ENCODE measurements at regions of chr10 and their contacts with region 1.

Region 1: DNA sequence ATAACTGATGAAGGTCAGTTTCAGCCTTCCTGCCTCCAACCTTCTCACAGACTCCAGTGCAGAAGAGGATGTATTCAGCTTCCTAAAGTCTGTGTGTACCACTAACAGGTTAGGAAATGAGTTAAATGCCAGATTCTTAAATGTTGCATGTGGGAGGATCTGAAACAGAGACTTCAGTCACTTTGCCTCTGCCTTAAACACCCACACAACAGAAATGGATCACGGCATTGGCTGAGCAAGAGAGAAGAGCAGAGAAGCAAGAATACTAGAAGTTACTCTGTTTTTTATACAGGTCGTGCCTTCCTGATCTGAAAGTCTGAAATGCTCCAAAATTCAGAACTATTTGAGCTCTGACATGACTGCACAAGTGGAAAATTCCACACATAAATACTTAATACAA is 98.9 kb upstream of the ARHGAP21 start:
- DNase-seq: no peak
- H3K4me3 Mint-ChIP-seq: no peak overlapping the region
- H3K27ac Mint-ChIP-seq: no peak overlapping the region
- H3K4me1 Mint-ChIP-seq: peaks cover 40% of the 10 kb centered on the region
- H3K27me3 Mint-ChIP-seq: peaks cover 2% of the 10 kb centered on the region

Region 2: DNA sequence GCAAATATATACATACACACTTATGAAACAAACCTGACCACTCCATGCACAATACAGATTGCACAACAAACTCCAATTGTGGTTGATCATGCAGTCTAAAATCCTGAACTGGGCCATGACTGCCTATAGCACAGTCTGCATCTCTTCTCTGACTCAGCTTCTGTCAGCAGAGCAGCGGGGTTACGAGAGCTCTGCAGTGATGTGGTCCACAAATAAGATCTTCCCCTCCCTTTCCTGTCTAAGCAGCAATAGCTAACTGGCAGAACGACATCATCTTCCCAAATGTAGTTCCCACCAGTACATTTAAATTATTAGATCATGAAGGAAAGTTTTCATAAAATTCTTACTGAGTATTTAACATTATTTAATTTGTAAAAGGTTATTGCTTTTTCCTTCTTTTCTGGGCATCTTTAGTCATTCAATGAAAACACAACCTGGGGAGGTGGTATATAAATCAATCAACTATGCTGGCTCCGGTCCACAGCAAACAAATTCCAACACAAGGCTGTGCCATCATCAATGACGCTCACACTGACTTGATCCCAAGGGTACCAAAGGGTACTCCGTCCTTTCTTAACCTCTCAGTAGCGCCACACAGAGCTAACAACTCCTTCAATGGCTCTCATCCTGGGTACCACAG is 116.0 kb before region 1 on chr10:
- intact Hi-C with region 1: loop called (anchors 5 kb)
- DNase-seq: peak; percentile 26
- H3K4me3 Mint-ChIP-seq: no peak overlapping the region
- H3K27ac Mint-ChIP-seq: no peak overlapping the region
- H3K4me1 Mint-ChIP-seq: peaks cover 23% of the 10 kb centered on the region
- H3K27me3 Mint-ChIP-seq: no peaks in the 10 kb centered on the region

Region 3: GRCh38 chr10:24882047-24882698 is 59.6 kb after region 1 on chr10:
- intact Hi-C with region 1: loop called (anchors 5 kb)
- DNase-seq: peak; percentile 15
- H3K4me3 Mint-ChIP-seq: peak overlapping the region; percentile 19
- H3K27ac Mint-ChIP-seq: no peak overlapping the region
- H3K4me1 Mint-ChIP-seq: peaks cover 30% of the 10 kb centered on the region
- H3K27me3 Mint-ChIP-seq: no peaks in the 10 kb centered on the region

Region 4: DNA sequence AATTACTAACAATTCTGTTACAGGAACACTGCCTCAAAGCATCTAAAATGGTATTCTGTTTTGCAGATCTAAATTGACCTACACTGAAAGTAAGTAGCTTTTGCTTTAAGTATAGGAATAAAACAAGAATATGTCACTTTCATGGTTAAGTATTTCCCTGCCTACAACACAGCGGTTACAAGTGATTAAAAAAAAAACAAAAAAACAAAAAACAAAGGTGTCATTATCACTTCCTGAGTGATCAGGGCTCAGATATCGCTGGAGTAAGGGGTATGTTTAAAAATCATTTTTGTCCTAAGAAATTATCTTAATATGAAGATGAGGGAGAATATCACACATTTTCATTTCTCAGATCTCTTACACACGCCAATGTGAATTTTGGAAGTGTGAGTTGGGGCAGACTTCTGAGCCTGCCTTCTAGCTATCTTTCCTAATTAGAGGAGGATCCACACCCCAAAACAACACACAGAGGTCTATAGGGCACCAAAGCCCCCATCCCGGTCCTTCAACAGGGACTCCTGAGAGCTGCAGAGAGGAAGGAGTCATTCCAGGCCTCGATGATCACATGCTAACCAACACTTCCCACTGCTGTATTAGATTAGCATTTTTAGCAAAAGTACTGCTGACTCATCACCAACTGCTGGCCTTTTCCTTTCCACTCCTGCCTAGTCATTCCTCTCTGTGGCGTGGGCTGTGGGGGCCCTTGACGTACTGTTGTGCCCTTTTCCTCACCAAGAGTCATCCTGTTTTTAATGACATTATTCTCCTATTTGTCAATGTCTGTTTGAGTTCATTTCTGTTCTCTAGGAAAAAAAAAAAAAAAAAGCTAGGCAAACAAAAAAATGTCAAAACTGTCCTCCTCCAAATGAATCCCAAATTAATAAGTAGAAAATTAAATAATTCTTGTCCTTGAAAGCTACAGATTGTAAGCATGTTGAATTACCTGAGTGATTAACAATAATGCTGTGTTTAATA is 98.6 kb after region 1 on chr10:
- intact Hi-C with region 1: loop called (anchors 1 kb)
- DNase-seq: peak; percentile 33
- H3K4me3 Mint-ChIP-seq: peak overlapping the region; percentile 53
- H3K27ac Mint-ChIP-seq: peak overlapping the region; percentile 92
- H3K4me1 Mint-ChIP-seq: peaks cover 30% of the 10 kb centered on the region
- H3K27me3 Mint-ChIP-seq: no peaks in the 10 kb centered on the region

Region 5: GRCh38 chr10:25080880-25081581 is 258.4 kb after region 1 on chr10:
- intact Hi-C with region 1: loop called (anchors 5 kb)
- DNase-seq: peak; percentile 45
- H3K4me3 Mint-ChIP-seq: no peak overlapping the region
- H3K27ac Mint-ChIP-seq: no peak overlapping the region
- H3K4me1 Mint-ChIP-seq: peaks cover 15% of the 10 kb centered on the region
- H3K27me3 Mint-ChIP-seq: peaks cover 20% of the 10 kb centered on the region

Measured in activated T-helper 1 cell treated with anti-CD3 and anti-CD28 coated beads, Interleukin-12 subunit alpha, Interleukin-12 subunit beta, Interleukin-2, Interleukin-4 antibody, amounts not matched to agents 30 ng/mL and 10 ng/mL and 1 ng/mL, durations not matched to agents 14 hours and 24 hours and 36 hours (primary cell).